Esophagus squamous epithelium (tissue), 5 donors: ENCODE measurements at regions of chr7 and their contacts with region 1.

Region 1: DNA sequence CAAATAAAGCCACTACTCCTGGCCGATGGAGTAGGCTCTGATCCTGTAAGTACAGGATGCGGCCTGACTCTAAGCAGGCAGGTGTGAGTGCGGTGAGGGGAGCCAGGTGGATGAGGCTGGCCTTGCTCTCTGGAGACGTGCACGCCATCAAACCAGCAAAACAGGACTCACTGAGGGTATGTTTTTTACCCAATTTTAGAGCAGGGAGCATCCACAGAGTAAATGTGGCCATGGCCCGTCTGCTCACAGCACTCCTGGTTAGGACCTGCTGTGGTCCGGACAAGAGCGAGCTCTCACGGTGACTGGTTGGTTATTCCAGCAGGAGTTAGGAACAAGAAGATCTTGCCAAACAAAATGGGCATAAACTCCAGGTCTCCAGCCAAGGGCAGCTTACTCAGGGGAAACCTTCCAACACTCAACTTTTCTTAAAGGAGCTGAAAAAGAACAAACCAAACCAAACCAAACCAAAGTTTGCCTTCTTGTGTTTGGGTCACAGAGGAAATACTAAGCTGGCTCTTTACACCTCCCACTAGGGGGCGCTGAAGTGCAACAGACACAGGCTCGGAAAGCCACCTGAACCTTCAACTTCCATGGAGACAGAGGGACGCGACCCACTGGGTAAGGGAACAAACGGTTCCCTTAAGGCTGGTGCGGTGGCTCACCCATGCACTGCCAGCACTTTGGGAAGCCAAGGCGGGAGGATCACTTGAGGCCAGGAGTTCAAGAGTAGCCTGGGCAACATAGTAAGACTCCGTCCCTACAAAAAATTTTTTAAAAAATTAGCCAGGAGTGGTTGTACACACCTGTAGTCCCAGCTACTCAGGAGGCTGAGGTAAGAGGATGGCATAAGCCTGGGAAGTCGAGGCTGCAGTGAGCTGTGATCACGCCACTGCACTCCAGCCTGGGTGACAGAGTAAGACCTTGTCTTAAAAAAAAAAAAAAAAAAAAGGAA is 122.4 kb downstream of the CLEC2L start:
- DNase-seq: peak; percentile 18
- H3K4me3 ChIP-seq: no peak overlapping the region
- H3K27ac ChIP-seq: peak overlapping the region in 1 of 4 donors; percentile 20
- H3K4me1 ChIP-seq: peaks cover 0 to 41% (median 9%) of the 10 kb centered on the region in 3 donors
- H3K27me3 ChIP-seq: no peaks in the 10 kb centered on the region
- CTCF ChIP-seq: peak; percentile 86 to 95 (median 90)
- POLR2A ChIP-seq: no peak

Region 2: GRCh38 chr7:139777948-139778841 is 132.3 kb after region 1 on chr7 and contains the start of gene HIPK2:
- intact Hi-C with region 1: loop called (anchors 10 kb)
- DNase-seq: peak; percentile 15
- H3K4me3 ChIP-seq: peak within 1 kb of the TSS; percentile 86 to 92 (median 90)
- H3K27ac ChIP-seq: peak within 1 kb of the TSS; percentile 98 to 99 (median 98)
- H3K4me1 ChIP-seq: peaks cover 21 to 82% (median 39%) of the 10 kb centered on the region in 3 donors
- H3K27me3 ChIP-seq: no peaks in the 10 kb centered on the region
- CTCF ChIP-seq: no peak
- POLR2A ChIP-seq: peak in 1 of 4 donors; percentile 64
- total RNA-seq, gene HIPK2: 17.8 to 37.9 (median 29.3) TPM

Region 3: GRCh38 chr7:139915864-139916716 is 270.2 kb after region 1 on chr7:
- intact Hi-C with region 1: no loop called
- DNase-seq: no peak
- H3K4me3 ChIP-seq: no peak overlapping the region
- H3K27ac ChIP-seq: peak overlapping the region; percentile 70 to 90 (median 80)
- H3K4me1 ChIP-seq: peaks cover 20 to 50% (median 29%) of the 10 kb centered on the region in 3 donors
- H3K27me3 ChIP-seq: no peaks in the 10 kb centered on the region
- CTCF ChIP-seq: no peak
- POLR2A ChIP-seq: no peak

Region 4: GRCh38 chr7:140003913-140004382 is 358.1 kb after region 1 on chr7:
- intact Hi-C with region 1: loop called (anchors 2 kb)
- DNase-seq: no peak
- H3K4me3 ChIP-seq: no peak overlapping the region
- H3K27ac ChIP-seq: no peak overlapping the region
- H3K4me1 ChIP-seq: peaks cover 0 to 6% (median 0%) of the 10 kb centered on the region in 3 donors
- H3K27me3 ChIP-seq: peaks cover 0 to 4% (median 0%) of the 10 kb centered on the region in 4 donors
- CTCF ChIP-seq: peak; percentile 39 to 71 (median 58)
- POLR2A ChIP-seq: no peak